HEK293 (cell line): ENCODE measurements at regions of chr17 and their contacts with region 1.

Region 1: GRCh38 chr17:44218344-44219107 is 949 bp downstream of the UBTF start:
- H3K4me3 ChIP-seq: peak overlapping the region; percentile 79
- H3K27ac ChIP-seq: peak overlapping the region; percentile 100
- H3K4me1 ChIP-seq: peaks cover 11% of the 10 kb centered on the region
- CTCF ChIP-seq: peak; percentile 79

Region 2: DNA sequence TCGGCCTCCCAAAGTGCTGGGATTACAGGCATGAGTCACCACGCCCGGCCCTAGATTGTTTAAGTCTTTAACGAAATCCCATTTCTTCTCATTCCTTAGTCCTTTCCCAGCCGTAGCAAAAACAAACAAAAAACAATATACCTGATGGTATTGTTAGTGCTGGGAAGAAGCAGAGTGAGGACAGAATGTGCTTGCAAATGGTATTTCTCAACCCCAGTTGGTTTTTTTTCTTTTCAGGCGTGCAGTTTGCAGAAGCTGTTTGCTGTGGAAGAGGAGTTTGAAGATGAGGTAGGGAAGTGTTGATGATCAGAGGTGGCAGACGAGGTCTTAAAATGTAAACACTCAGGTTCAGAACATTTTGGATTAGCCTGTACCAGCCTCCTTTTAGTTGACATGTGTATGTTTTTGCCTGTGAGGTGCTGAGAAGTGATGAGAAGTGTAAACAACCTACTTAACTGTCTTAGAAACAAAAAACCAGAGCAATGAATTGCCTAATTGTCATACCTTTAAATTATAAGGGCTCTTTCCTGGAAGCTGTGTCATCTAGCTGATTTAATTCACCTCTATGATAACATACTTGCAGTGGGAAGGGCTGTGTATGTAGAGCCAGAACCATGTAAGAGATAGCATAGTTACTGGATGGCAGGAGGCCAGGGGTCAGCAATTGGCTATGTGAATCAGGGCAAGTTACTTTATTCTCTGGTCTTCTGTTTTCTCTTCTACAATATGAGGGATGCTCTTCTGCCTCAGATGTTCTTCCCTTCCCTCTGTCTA is 73.4 kb before region 1 on chr17:
- CTCF ChIA-PET with region 1: no interaction called
- POLR2A ChIA-PET with region 1: no interaction called
- H3K4me3 ChIP-seq: no peak overlapping the region
- H3K27ac ChIP-seq: peak overlapping the region; percentile 37; the same call in 1 of the 2 replicates
- H3K4me1 ChIP-seq: no peaks in the 10 kb centered on the region
- CTCF ChIP-seq: no peak

Region 3: DNA sequence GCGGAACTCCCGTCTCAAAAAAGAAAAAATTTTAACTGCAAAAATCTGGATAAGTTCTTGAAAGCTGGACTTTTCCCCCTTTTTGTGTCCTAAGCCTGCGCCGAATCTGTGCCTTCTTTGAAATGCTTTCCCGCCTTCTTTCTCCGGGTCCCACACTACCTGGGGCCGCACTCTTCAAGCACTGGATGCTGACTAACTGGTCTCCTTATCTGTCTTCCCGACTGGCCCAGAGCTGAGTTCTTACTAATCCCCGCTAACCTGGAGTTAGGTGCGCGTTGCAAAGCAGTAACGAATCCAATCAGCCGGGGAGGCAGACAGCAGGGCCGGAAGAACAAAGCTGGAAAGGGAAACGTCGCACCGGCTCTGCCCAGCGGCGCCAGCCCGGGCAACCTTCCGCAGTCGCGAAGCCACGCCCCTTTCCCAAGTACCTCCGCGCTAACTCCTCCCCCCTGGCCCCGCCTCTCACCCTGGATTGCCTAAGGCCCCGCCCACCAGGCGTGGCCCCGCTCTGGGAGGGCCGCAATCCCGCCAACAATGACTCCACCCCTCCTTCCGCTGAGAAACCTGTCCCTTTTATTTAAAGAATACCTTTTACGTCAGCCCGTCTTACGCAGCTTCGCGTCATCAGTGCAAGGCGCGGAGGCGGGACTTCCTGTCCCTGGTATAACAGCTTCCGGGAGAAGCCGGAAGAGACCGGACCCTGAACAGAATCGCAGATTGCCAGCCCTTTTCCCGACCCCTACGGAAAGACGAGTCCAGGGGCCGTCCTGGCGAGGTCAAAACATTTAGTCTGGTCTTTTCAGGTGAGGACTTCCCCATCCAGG is 32.0 kb before region 1 on chr17 and contains the start of gene TMUB2:
- CTCF ChIA-PET with region 1: interaction called, 4 read pairs
- POLR2A ChIA-PET with region 1: interaction called, 23 read pairs
- H3K4me3 ChIP-seq: peak within 1 kb of the TSS; percentile 77
- H3K27ac ChIP-seq: peak within 1 kb of the TSS; percentile 91
- H3K4me1 ChIP-seq: peaks cover 3% of the 10 kb centered on the region
- CTCF ChIP-seq: no peak

Region 4: DNA sequence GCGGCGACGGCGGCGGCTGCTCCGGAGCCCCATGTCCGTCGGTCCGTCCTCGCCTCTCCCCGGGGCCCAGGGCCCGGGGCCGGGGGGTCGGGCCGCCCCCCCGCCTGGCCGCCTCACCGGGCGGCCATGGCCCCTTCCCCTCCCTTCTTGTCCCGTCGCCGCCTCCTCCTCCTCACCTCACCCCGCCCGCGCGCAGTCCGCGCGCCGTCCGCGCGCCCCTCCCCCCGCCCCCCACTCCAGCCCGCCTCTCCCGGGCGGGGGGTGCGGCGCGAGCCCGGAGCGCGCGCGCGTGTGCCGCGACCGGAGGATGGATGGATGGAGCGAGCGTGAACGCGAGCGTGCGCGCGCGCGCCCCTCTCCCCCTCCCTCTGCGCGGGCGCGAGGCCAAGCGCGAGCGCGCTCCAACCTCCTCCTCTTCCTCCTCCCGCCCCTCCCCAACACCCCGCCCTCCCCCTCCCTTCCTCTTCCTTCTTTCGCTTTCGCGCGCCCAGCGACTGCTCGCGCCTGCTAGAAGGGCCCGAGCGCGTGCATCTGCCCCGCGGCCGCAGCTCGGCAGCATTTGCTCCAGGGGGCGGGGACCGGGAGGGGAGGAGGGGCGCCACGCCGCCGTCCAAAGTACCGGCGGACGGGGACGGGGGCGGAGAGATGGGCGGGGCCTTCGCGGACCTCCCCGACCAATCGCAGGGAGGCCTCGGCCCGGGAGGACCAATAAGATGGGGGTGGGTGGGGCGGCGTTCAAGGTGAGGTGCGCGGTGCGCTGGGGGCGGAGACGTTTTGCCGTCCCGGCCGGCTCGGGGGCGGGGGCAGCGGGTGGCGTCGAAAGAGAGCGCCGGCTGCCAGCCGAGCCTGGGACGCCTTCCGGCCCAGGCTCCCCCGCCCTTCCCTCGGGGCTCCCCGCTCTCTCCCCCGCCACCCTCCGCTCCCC is 18.7 kb before region 1 on chr17 and contains the start of gene ATXN7L3:
- CTCF ChIA-PET with region 1: interaction called, 7 read pairs
- POLR2A ChIA-PET with region 1: interaction called, 20 read pairs
- H3K4me3 ChIP-seq: peak within 1 kb of the TSS; percentile 75
- H3K27ac ChIP-seq: peak within 1 kb of the TSS; percentile 88
- H3K4me1 ChIP-seq: peaks cover 5% of the 10 kb centered on the region
- CTCF ChIP-seq: no peak

Region 5: DNA sequence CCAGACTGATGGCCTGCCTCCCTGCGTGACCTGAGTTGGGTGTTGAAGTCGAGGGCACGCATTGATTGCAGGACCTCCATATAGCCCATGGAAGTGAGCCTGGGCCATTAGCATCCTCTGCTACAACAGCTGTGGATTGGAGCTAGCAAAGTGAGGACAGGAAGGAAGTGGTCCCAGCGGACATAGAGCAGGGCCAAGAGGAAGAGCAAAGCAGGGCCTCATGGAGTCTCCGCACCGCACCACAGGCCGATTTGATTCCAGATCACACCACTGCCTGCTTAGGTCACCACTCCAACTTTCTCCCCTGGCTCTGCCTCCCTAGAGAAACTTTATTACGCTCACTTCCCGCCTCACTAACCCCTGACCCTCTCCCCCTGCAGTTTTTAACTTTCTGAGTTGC is 11.6 kb after region 1 on chr17:
- CTCF ChIA-PET with region 1: interaction called, 11 read pairs
- POLR2A ChIA-PET with region 1: interaction called, 18 read pairs
- H3K4me3 ChIP-seq: no peak overlapping the region
- H3K27ac ChIP-seq: no peak overlapping the region
- H3K4me1 ChIP-seq: peaks cover 4% of the 10 kb centered on the region
- CTCF ChIP-seq: no peak

Region 6: DNA sequence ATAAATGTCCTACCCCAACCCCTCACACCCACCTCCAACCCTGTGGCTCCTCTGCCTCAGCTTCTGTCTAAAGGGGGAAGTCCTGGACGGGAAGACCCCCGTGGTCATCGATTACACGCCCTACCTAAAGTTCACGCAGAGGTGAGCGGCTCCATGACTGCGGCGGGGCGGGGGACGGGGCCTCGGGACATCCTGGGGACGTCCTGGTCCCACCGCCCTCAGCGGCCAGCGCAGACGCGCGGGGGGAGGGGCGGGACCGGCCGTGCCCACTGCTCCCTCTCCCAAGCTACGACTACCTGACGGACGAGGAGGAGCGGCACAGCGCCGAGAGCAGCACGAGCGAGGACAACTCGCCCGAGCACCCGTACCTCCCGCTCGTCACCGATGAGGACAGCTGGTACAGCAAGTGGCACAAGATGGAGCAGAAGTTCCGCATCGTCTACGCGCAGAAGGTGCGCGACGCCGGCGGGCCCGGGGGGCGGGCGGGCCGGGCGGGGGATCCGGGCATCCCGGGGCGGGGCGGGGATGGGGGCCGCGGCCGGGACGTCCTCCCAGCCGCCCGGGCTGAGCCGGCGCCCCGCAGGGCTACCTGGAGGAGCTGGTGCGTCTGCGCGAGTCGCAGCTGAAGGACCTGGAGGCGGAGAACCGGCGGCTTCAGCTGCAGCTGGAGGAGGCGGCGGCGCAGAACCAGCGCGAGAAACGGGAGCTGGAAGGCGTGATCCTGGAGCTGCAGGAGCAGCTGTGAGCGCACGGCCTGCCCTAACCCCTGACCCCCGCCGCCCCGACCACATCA is 96.5 kb after region 1 on chr17:
- CTCF ChIA-PET with region 1: interaction called, 8 read pairs
- POLR2A ChIA-PET with region 1: interaction called, 38 read pairs
- H3K4me3 ChIP-seq: peak overlapping the region; percentile 44
- H3K27ac ChIP-seq: peak overlapping the region; percentile 16; the same call in 1 of the 2 replicates
- H3K4me1 ChIP-seq: peaks cover 4% of the 10 kb centered on the region; the same call in 1 of the 2 replicates
- CTCF ChIP-seq: no peak

Region 7: DNA sequence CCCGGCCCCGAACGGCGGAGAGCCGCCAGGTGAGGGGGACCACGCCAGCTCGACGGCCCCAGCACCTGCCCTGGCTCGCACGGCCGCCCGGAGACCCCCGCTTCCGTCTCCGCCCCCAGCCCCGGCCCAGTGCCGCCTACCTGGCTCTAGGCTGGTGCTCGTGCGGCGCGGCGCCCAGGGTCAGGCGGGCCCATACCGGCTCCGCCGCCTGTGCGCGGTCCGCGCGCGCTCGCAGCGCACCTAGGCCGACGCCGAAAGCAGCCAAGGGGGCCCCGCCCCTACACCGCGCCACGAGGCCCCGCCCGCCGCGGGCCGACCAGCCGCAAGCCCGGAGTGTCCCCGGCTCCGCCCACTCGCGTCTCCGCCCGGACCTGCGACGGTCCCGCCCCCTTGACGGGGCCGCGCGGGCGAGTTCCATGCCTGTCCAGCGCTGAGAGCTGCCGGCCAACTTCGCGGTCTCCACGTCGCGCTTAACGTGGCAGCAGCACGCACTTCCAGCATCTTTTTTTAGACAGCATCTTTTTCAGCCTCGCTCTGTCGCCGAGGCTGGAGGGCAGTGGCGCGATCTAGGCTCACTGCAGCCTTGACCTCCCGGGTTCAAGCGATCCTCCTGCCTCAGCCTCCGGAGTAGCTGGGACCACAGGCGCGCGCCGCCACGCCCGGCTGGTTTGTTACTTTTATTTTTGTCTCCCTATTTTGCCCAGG is 106.2 kb after region 1 on chr17 and contains the start of gene SLC25A39:
- CTCF ChIA-PET with region 1: interaction called, 5 read pairs
- POLR2A ChIA-PET with region 1: interaction called, 13 read pairs
- H3K4me3 ChIP-seq: peak within 1 kb of the TSS; percentile 88
- H3K27ac ChIP-seq: peak within 1 kb of the TSS; percentile 56; the same call in 1 of the 2 replicates
- H3K4me1 ChIP-seq: 0 out of 2 replicates have a peak, but pooled peaks cover 3% of the 10 kb centered on the region
- CTCF ChIP-seq: no peak